Activated CD8-positive, alpha-beta T cell treated with anti-CD3 and anti-CD28 coated beads, Interleukin-2, amount 10 ng/mL, durations not matched to agents 7 days and 5 days (primary cell): ENCODE measurements at regions of chr2 and their contacts with region 1.

Region 1: GRCh38 chr2:69375494-69376353 is 11.3 kb downstream of the GFPT1 start:
- DNase-seq: peak; percentile 47
- ATAC-seq: peak; percentile 79
- H3K4me3 Mint-ChIP-seq: no peak overlapping the region
- H3K27ac Mint-ChIP-seq: no peak overlapping the region
- H3K4me1 Mint-ChIP-seq: peaks cover 14% of the 10 kb centered on the region
- H3K27me3 Mint-ChIP-seq: no peaks in the 10 kb centered on the region

Region 2: DNA sequence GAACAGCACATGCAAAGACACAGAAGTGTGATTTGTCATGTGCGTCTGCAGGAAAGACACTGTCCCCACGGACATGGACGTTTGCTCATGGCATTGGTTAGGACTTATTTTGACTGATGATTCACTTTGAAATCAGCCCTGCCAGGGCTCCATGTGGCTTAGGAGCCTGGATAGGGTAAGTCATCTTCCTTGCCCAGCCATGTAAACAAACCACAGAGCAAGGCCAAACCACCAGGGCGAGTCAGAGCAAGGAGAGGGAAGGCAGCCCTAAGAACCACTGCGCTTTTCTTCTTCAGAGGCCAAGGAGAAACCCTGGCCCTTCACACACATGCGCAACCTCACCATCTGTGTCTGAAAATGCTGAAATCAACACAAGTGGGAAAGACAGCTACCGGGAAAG is 77.5 kb before region 1 on chr2:
- CTCF ChIA-PET with region 1: no interaction called
- POLR2A ChIA-PET with region 1: no interaction called
- DNase-seq: no peak
- ATAC-seq: no peak
- H3K4me3 Mint-ChIP-seq: no peak overlapping the region
- H3K27ac Mint-ChIP-seq: no peak overlapping the region
- H3K4me1 Mint-ChIP-seq: no peaks in the 10 kb centered on the region
- H3K27me3 Mint-ChIP-seq: peaks cover 17% of the 10 kb centered on the region

Region 3: DNA sequence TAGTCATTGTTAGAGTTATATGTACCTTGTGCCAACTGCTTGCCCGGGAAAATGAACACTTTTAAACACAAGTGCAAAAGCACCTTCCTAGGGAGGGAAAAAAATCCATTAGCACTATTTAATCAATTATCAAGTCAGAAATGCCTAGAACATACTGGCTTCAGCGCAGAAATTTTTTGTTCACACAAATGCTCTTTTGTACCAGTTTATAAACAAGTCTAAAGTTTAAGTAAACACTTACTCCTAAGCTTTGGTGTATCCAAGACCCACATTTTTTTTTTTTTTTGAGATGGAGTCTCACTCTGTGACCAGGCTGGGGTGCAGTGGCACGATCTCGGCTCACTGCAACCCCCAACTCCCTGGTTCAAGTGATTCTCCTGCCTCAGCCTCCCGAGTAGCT is 19.3 kb before region 1 on chr2:
- CTCF ChIA-PET with region 1: interaction called, 10 read pairs
- POLR2A ChIA-PET with region 1: no interaction called
- DNase-seq: no peak
- ATAC-seq: no peak
- H3K4me3 Mint-ChIP-seq: no peak overlapping the region
- H3K27ac Mint-ChIP-seq: no peak overlapping the region
- H3K4me1 Mint-ChIP-seq: peaks cover 4% of the 10 kb centered on the region
- H3K27me3 Mint-ChIP-seq: no peaks in the 10 kb centered on the region

Region 4: GRCh38 chr2:69386789-69387734 is 11.3 kb after region 1 on chr2 and contains the start of gene GFPT1:
- CTCF ChIA-PET with region 1: interaction called, 14 read pairs
- POLR2A ChIA-PET with region 1: interaction called, 4 read pairs
- DNase-seq: peak; percentile 94
- ATAC-seq: peak; percentile 96
- H3K4me3 Mint-ChIP-seq: peak within 1 kb of the TSS; percentile 87
- H3K27ac Mint-ChIP-seq: peak within 1 kb of the TSS; percentile 89
- H3K4me1 Mint-ChIP-seq: peaks cover 38% of the 10 kb centered on the region
- H3K27me3 Mint-ChIP-seq: peaks cover 2% of the 10 kb centered on the region
- total RNA-seq, gene GFPT1: 23.5 to 26.1 TPM